ENCODE measurements at regions of chr13 and their contacts with region 1.

Region 1: GRCh38 chr13:41608839-41609177 is 151.5 kb downstream of the RGCC start:
- DNase-seq: no peak
- ATAC-seq: no peak
- H3K4me3 ChIP-seq: no peak overlapping the region
- H3K27ac ChIP-seq: no peak overlapping the region
- H3K4me1 ChIP-seq: peaks cover 7 to 36% (median 19%) of the 10 kb centered on the region in 9 donors
- H3K27me3 ChIP-seq: no peaks in the 10 kb centered on the region
- CTCF ChIP-seq: no peak

Region 2: GRCh38 chr13:41122838-41123237 is 486.0 kb before region 1 on chr13:
- intact Hi-C with region 1: no loop called
- DNase-seq: no peak
- ATAC-seq: no peak
- H3K4me3 ChIP-seq: no peak overlapping the region
- H3K27ac ChIP-seq: no peak overlapping the region
- H3K4me1 ChIP-seq: peaks cover 0 to 7% (median 3%) of the 10 kb centered on the region in 9 donors
- H3K27me3 ChIP-seq: no peaks in the 10 kb centered on the region
- CTCF ChIP-seq: no peak

Region 3: DNA sequence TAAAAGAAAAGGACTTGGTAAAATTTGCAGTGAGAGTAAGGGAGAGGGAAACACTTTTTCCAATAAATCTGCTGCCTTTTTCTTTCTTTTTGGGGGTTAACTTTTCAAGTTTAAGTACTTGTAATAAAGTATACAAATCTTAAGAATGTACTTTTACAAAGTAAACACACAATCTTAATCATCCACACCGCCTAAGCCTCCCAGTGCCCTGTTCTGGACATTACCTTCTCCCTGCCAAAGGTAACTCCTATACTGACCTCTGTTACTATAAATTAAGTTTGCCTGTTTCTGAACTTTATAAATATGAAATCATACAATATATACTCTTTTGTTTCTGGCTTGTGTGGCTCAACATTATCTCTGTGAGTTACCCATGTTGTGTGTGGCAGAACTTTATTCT is 13.5 kb before region 1 on chr13:
- intact Hi-C with region 1: loop called in 1 of 10 experiments (anchors 1 kb)
- DNase-seq: no peak
- ATAC-seq: no peak
- H3K4me3 ChIP-seq: no peak overlapping the region
- H3K27ac ChIP-seq: no peak overlapping the region
- H3K4me1 ChIP-seq: peaks cover 0 to 16% (median 4%) of the 10 kb centered on the region in 9 donors
- H3K27me3 ChIP-seq: no peaks in the 10 kb centered on the region
- CTCF ChIP-seq: no peak